Panc1 (cell line): ENCODE measurements at regions of chr3 and their contacts with region 1.

Region 1: DNA sequence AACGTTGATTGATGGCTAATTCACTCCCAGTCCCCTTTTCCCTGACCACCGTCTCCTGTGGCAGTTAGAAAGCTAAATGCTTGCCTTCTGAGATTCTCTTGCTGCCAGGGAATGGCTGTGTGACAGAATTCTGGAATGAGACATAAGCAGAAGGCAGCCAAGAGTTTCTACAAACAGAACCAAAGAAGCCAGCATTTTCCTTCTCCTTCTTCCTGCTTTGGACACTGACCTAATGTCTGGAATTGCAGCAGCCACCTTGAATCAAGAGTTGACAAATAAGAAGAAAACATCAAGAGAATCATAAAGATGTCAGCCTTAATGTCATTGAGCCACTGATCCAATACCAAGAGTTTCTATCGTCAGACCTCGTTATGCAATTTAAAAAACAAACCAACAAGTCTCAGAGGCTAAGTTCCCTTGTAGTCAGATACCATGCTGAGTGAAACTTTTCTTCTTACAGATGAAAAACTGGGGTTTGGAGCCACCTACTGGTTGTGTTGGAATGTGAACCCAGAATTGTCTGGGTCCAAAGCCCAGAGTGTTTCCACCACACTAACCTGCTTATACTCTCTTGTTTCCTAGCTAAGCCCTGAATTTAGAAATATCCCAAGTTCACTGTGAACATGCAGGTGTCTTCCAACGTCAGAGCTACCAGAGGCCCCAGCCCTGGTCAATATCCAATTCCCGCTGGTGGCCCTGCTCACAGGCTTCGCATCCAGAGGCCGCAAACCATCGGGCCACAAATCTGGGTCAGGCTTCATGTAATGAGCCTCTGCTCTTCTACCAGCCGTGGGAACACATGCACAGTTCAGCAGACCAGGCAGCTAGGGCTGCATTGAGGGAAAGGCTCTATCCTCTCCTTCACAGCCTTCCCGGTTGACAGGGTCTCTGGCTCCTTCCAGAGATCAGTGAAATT is 42.5 kb downstream of the MCF2L2 start:
- DNase-seq: peak; percentile 51
- ATAC-seq: peak; percentile 87
- H3K4me3 ChIP-seq: no peak overlapping the region
- H3K27ac ChIP-seq: no peak overlapping the region
- H3K4me1 ChIP-seq: no peaks in the 10 kb centered on the region
- H3K27me3 ChIP-seq: no peaks in the 10 kb centered on the region
- CTCF ChIP-seq: peak; percentile 82

Region 2: DNA sequence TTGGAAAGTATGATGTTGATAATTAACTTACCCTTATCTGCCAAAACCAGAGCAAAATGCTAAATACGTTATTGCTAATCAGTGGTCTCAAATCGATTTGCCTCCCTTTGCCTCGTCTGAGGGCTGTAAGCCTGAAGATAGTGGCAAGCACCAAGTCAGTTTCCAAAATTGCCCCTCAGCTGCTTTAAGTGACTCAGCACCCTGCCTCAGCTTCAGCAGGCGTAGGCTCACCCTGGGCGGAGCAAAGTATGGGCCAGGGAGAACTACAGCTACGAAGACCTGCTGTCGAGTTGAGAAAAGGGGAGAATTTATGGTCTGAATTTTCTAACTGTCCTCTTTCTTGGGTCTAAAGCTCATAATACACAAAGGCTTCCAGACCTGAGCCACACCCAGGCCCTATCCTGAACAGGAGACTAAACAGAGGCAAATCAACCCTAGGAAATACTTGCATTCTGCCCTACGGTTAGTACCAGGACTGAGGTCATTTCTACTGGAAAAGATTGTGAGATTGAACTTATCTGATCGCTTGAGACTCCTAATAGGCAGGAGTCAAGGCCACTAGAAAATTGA is 465.4 kb before region 1 on chr3:
- CTCF ChIA-PET with region 1: no interaction called
- POLR2A ChIA-PET with region 1: no interaction called
- in situ Hi-C with region 1: no loop called
- intact Hi-C with region 1: loop called (anchors 5 kb)
- DNase-seq: no peak
- ATAC-seq: peak; percentile 79
- H3K4me3 ChIP-seq: no peak overlapping the region
- H3K27ac ChIP-seq: peak overlapping the region; percentile 68
- H3K4me1 ChIP-seq: peaks cover 13% of the 10 kb centered on the region
- H3K27me3 ChIP-seq: no peaks in the 10 kb centered on the region
- CTCF ChIP-seq: no peak

Region 3: GRCh38 chr3:183122257-183122932 is 263.6 kb before region 1 on chr3:
- CTCF ChIA-PET with region 1: interaction called, 10 read pairs
- POLR2A ChIA-PET with region 1: no interaction called
- in situ Hi-C with region 1: no loop called
- intact Hi-C with region 1: loop called (anchors 1 kb)
- DNase-seq: peak; percentile 58
- ATAC-seq: peak; percentile 68
- H3K4me3 ChIP-seq: no peak overlapping the region
- H3K27ac ChIP-seq: no peak overlapping the region
- H3K4me1 ChIP-seq: no peaks in the 10 kb centered on the region
- H3K27me3 ChIP-seq: no peaks in the 10 kb centered on the region
- CTCF ChIP-seq: peak; percentile 81; the same call in 1 of the 2 replicates

Region 4: DNA sequence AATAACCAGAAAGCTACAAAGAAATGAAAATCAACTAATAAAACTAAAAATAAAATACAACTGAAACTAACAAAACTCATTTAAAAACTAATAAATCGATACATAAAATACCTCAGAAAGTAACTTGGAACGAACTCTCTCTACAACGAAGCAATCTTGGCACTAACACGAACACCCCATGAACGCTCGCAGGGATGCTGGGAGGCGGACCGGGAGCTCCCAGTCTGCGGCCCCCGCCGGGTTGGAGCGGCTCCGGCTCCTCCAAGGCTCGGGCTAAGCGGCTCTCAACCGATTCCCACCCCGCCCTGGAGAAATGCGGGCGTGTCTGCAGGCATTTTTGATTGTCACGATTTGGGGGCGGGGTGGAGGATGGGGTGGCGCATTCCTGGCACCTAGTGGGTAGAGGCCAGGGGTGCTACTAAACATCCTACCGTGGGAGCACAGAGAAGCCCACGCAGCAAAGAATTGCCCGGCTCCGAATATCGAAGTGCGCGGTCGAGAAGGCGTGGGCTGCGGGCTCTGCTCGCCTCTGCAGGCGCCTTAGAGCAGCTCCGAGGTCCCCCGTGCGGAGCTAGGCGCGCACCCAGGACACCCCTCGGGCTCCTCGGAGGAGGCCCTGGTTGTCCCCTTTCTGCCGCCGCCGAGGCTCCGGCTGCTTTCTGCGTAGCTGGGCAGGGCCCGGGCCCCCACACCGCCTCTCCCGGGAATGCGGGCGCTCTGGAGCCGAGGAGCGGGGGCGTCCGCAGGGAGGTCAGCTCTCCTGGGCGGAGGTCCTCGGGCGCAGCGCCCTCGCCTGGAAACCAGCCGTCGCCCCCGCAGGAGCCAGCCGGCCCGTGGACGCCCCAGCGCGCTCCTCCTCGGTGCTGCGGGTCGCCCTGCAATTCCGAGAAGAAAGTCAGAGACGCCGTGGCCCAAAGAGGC is 207.1 kb before region 1 on chr3:
- CTCF ChIA-PET with region 1: interaction called, 124 read pairs
- POLR2A ChIA-PET with region 1: no interaction called
- in situ Hi-C with region 1: no loop called
- intact Hi-C with region 1: loop called (anchors 1 kb)
- DNase-seq: no peak
- ATAC-seq: peak; percentile 83
- H3K4me3 ChIP-seq: peak overlapping the region; percentile 46 to 64
- H3K27ac ChIP-seq: no peak overlapping the region
- H3K4me1 ChIP-seq: no peaks in the 10 kb centered on the region
- H3K27me3 ChIP-seq: peaks cover 8% of the 10 kb centered on the region; the same call in 1 of the 2 replicates
- CTCF ChIP-seq: peak; percentile 75; the same call in 1 of the 2 replicates

Region 5: GRCh38 chr3:183188895-183189462 is 197.0 kb before region 1 on chr3:
- CTCF ChIA-PET with region 1: interaction called, 124 read pairs
- POLR2A ChIA-PET with region 1: interaction called, 6 read pairs
- in situ Hi-C with region 1: no loop called
- intact Hi-C with region 1: loop called (anchors 1 kb)
- DNase-seq: no peak
- ATAC-seq: no peak
- H3K4me3 ChIP-seq: no peak overlapping the region
- H3K27ac ChIP-seq: no peak overlapping the region
- H3K4me1 ChIP-seq: peaks cover 8% of the 10 kb centered on the region
- H3K27me3 ChIP-seq: no peaks in the 10 kb centered on the region
- CTCF ChIP-seq: peak; percentile 80

Region 6: GRCh38 chr3:183252973-183253901 is 132.7 kb before region 1 on chr3 and contains the start of gene B3GNT5:
- CTCF ChIA-PET with region 1: interaction called, 6 read pairs
- POLR2A ChIA-PET with region 1: no interaction called
- in situ Hi-C with region 1: no loop called
- intact Hi-C with region 1: loop called (anchors 10 kb)
- DNase-seq: no peak
- ATAC-seq: peak; percentile 68
- H3K4me3 ChIP-seq: peak within 1 kb of the TSS; percentile 83 to 95
- H3K27ac ChIP-seq: peak within 1 kb of the TSS; percentile 82
- H3K4me1 ChIP-seq: peaks cover 16% of the 10 kb centered on the region
- H3K27me3 ChIP-seq: no peaks in the 10 kb centered on the region
- CTCF ChIP-seq: no peak
- total RNA-seq, gene B3GNT5: 22.8 TPM

Region 7: DNA sequence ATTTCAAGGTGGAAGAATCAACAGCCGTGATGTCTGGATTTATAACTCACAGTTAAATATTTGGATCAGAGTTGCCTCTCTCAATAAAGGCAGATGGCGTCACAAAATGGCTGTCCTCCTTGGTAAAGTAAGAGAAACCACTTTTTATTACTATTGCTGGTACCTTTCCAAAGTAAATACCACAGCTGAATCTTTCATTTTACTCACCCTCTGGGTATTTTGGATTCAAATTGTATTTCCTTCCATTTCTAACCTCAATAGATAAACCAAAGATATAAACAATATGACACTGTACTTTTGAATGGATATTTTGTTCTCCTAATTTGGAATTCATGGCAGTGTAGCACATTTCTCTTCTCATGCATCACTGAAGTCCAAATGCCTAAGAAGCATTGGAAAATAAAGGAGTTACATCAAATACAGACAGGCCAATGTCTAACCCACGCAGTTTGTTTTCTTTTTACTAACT is 279.0 kb after region 1 on chr3:
- CTCF ChIA-PET with region 1: no interaction called
- POLR2A ChIA-PET with region 1: interaction called, 11 read pairs
- in situ Hi-C with region 1: no loop called
- intact Hi-C with region 1: no loop called
- DNase-seq: peak; percentile 41
- ATAC-seq: peak; percentile 86
- H3K4me3 ChIP-seq: no peak overlapping the region
- H3K27ac ChIP-seq: no peak overlapping the region
- H3K4me1 ChIP-seq: peaks cover 6% of the 10 kb centered on the region; the same call in 1 of the 2 replicates
- H3K27me3 ChIP-seq: no peaks in the 10 kb centered on the region
- CTCF ChIP-seq: no peak